K562 (cell line): ENCODE measurements at regions of chr6 and their contacts with region 1.

Region 1: GRCh38 chr6:43053545-43054205 is at the start of gene CUL7:
- DNase-seq: peak; percentile 96 to 98 (median 97)
- ATAC-seq: peak; percentile 98
- H3K4me3 ChIP-seq: peak within 1 kb of the TSS; percentile 73
- H3K27ac ChIP-seq: peak within 1 kb of the TSS; percentile 95
- H3K4me1 ChIP-seq: peaks cover 27 to 29% of the 10 kb centered on the region in 2 experiments
- H3K27me3 ChIP-seq: no peaks in the 10 kb centered on the region
- CTCF ChIP-seq: 0 out of 6 replicates have a peak, but pooled peaks of 1 of the 3 experiments have one; percentile 4
- EP300 ChIP-seq: peak; percentile 69
- POLR2A ChIP-seq: peak; percentile 97
- RAD21 ChIP-seq: peak in 1 of 2 experiments; percentile 40; a peak in 2 of 4 replicates
- polyA plus RNA-seq, gene CUL7: 0.44 to 0.74 TPM

Region 2: DNA sequence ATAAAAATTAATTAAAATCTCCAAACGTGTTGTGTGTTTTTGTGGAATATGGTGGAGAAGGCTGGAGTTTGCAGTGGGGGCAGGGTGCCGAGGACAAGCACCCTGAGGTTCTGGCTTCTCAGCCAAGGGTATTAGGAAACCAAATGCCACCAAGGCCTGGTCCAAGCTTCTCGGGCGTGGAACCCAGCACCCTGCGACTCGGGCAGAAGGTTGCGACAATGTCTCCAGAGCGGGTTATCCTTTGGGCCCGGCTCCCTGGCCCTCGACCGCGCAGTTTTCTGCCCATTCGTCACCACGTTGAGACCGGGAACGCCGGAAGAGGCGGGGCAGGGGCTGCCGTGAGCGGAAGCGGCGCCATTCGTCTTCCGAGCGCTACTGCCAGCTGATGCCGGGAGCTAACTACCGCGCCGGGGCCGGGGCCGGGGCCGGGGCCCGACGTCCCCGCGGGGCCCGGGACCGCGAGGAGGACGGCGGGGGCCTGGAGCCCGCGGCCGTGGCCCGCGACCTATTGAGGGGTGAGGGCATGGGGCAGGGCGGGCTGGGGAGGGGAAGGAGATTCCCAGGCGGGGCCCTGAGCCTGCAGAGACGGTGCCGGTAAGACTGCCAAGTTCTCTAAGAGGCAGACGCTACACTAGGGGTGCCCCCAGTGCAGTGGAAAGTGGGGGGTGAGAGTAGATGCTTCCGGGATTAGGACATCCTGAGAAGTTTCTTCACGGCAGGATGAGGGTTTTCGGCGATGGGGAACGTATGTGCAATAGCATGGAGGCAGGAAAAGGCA is 32.2 kb before region 1 on chr6 and contains the start of gene RRP36:
- CTCF ChIA-PET with region 1: no interaction called
- POLR2A ChIA-PET with region 1: interaction called, 17 read pairs
- in situ Hi-C with region 1: no loop called
- intact Hi-C with region 1: no loop called
- DNase-seq: peak; percentile 85 to 92 (median 90)
- ATAC-seq: peak; percentile 93
- H3K4me3 ChIP-seq: peak within 1 kb of the TSS; percentile 72
- H3K27ac ChIP-seq: peak within 1 kb of the TSS; percentile 83
- H3K4me1 ChIP-seq: peaks cover 34 to 35% of the 10 kb centered on the region in 2 experiments
- H3K27me3 ChIP-seq: no peaks in the 10 kb centered on the region
- CTCF ChIP-seq: no peak
- EP300 ChIP-seq: no peak; the same call in 1 of the 2 replicates
- POLR2A ChIP-seq: peak; percentile 87
- RAD21 ChIP-seq: no peak
- polyA plus RNA-seq, gene RRP36: 27.6 to 31.7 TPM